Heart left ventricle (tissue), 16 donors: ENCODE measurements at regions of chr2 and their contacts with region 1.

Region 1: GRCh38 chr2:77434880-77435279 is 87.3 kb downstream of the LRRTM4 start:
- DNase-seq: no peak
- ATAC-seq: no peak
- H3K4me3 ChIP-seq: no peak overlapping the region
- H3K27ac ChIP-seq: no peak overlapping the region
- H3K4me1 ChIP-seq: no peaks in the 10 kb centered on the region
- H3K27me3 ChIP-seq: no peaks in the 10 kb centered on the region
- CTCF ChIP-seq: peak in 7 of 12 donors; percentile 16 to 37 (median 28)
- POLR2A ChIP-seq: no peak

Region 2: DNA sequence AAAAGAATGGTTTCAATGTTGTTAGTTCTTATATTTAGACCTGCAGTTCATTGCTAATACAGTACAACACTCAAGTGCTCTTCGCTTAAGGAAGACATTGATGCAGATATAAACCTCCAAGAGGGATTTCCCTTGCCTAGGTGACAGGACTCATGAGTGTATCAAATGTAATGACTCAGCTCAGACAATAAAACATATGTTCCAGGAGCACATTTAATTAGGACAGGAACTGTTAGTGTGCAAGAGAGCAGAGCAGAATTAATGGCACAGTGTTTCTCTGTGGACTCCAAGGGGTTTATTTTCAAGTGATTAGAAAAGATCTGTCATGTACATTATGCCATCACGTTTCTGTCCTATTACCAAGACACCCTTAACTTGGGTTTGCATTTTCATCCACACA is 287.7 kb before region 1 on chr2:
- intact Hi-C with region 1: no loop called
- DNase-seq: no peak
- ATAC-seq: no peak
- H3K4me3 ChIP-seq: no peak overlapping the region
- H3K27ac ChIP-seq: no peak overlapping the region
- H3K4me1 ChIP-seq: no peaks in the 10 kb centered on the region
- H3K27me3 ChIP-seq: no peaks in the 10 kb centered on the region
- CTCF ChIP-seq: no peak
- POLR2A ChIP-seq: no peak

Region 3: GRCh38 chr2:77512507-77512906 is 77.6 kb after region 1 on chr2:
- intact Hi-C with region 1: loop called in 1 of 10 experiments (anchors 10 kb)
- DNase-seq: no peak
- ATAC-seq: no peak
- H3K4me3 ChIP-seq: no peak overlapping the region
- H3K27ac ChIP-seq: no peak overlapping the region
- H3K4me1 ChIP-seq: no peaks in the 10 kb centered on the region
- H3K27me3 ChIP-seq: no peaks in the 10 kb centered on the region
- CTCF ChIP-seq: no peak
- POLR2A ChIP-seq: no peak

Region 4: GRCh38 chr2:77713412-77713811 is 278.5 kb after region 1 on chr2:
- intact Hi-C with region 1: no loop called
- DNase-seq: no peak
- ATAC-seq: no peak
- H3K4me3 ChIP-seq: no peak overlapping the region
- H3K27ac ChIP-seq: no peak overlapping the region
- H3K4me1 ChIP-seq: no peaks in the 10 kb centered on the region
- H3K27me3 ChIP-seq: no peaks in the 10 kb centered on the region
- CTCF ChIP-seq: no peak
- POLR2A ChIP-seq: no peak